Colonic mucosa (tissue), 4 donors: ENCODE measurements at regions of chr10 and their contacts with region 1.

Region 1: GRCh38 chr10:50224330-50224952 is 26.9 kb downstream of the ASAH2 start:
- DNase-seq: peak; percentile 29
- H3K4me3 ChIP-seq: no peak overlapping the region
- H3K27ac ChIP-seq: no peak overlapping the region
- H3K4me1 ChIP-seq: no peaks in the 10 kb centered on the region
- H3K27me3 ChIP-seq: no peaks in the 10 kb centered on the region
- CTCF ChIP-seq: peak; percentile 35

Region 2: DNA sequence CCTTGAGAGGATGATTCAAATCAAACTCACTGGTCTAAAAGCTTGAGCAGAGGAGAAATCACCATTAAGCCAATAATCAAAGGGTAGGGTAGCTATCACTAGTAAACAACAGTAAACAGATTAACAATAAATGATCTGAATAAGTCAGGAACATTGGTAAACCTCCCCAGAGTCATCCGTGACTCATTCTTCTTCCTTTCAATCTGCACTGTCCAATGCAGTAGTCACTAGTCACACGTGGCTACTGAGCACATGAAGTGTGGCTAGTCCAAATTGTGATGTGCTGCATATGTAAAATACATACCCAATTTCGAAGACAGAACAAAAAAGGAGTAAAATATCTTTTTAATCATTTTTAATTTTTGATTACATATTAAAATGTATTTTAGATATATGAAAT is 749.5 kb before region 1 on chr10:
- intact Hi-C with region 1: no loop called
- DNase-seq: no peak
- H3K4me3 ChIP-seq: no peak overlapping the region
- H3K27ac ChIP-seq: no peak overlapping the region
- H3K4me1 ChIP-seq: no peaks in the 10 kb centered on the region
- H3K27me3 ChIP-seq: no peaks in the 10 kb centered on the region
- CTCF ChIP-seq: no peak

Region 3: DNA sequence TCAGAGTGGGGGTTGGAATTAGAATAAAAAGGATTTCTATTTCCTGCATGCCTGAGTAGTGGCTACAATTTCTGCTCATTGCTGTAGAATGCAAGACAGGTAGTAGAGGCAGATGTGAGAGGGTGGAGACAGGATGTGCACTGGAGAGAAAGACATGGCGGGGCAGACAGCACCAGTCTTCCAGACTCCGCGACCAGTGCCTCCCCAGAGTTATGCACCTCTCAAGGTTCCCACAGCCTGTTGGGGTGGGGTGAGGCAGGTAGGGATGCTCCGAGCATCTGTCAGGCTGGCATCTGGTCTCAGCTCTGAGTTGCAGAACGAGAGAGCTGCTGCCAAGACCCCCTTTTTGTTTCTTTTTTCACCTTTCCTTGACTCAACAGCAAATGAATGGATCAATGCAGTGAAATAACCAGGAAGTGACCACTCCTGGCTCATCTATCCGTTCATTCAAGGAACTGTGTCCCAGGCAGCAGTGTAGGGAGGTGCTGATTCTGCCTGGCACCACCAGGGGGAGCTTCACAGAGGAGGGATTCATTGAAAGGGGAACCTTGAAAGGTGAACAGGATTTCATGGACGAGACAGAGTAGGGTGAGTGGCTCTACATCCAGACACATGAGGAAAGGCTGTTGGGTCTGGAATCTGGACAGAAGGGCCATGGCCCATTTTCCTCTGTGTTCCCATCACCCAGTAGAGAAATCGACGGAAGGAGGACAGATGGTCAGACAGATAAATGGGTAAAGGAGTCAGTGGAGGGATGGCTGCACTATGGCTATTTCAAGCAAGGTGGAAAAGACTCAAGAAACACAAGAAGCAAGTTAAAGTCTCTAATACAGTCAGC is 631.5 kb before region 1 on chr10:
- intact Hi-C with region 1: loop called (anchors 5 kb)
- DNase-seq: peak; percentile 65
- H3K4me3 ChIP-seq: no peak overlapping the region
- H3K27ac ChIP-seq: no peak overlapping the region
- H3K4me1 ChIP-seq: no peaks in the 10 kb centered on the region
- H3K27me3 ChIP-seq: no peaks in the 10 kb centered on the region
- CTCF ChIP-seq: peak; percentile 93